Activated naive CD4-positive, alpha-beta T cell treated with anti-CD3 and anti-CD28 coated beads for 36 hours (primary cell): ENCODE measurements at regions of chr6 and their contacts with region 1.

Region 1: GRCh38 chr6:29792123-29793035 is 35.2 kb upstream of the HLA-G start:
- DNase-seq: peak; percentile 82
- H3K4me3 Mint-ChIP-seq: peak overlapping the region; percentile 77
- H3K27ac Mint-ChIP-seq: no peak overlapping the region
- H3K4me1 Mint-ChIP-seq: peaks cover 12% of the 10 kb centered on the region
- H3K27me3 Mint-ChIP-seq: peaks cover 14% of the 10 kb centered on the region

Region 2: GRCh38 chr6:29737707-29738630 is 54.4 kb before region 1 on chr6:
- CTCF ChIA-PET with region 1: interaction called, 3 read pairs
- intact Hi-C with region 1: loop called (anchors 1 kb)
- DNase-seq: peak; percentile 85
- H3K4me3 Mint-ChIP-seq: no peak overlapping the region
- H3K27ac Mint-ChIP-seq: no peak overlapping the region
- H3K4me1 Mint-ChIP-seq: peaks cover 11% of the 10 kb centered on the region
- H3K27me3 Mint-ChIP-seq: no peaks in the 10 kb centered on the region

Region 3: DNA sequence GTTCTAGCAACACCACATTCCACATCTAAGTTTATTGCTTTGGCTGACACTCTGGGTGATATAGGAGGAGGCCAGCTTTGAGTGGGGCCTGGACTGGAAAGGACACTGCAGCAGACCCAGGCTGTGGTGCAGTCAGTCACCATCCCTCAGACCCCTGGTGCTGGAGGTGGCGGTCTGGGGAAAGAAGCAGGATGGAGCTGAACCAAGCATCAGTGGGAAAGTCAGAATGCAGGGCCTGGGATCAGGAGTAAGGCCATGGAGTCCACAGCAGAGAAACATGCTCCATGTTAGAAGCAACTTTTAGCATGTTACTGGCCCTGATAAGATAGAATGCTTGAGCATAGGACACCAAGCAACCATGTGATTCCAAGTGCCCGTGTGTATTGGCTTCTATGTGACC is 155.9 kb after region 1 on chr6:
- CTCF ChIA-PET with region 1: no interaction called
- intact Hi-C with region 1: loop called (anchors 1 kb)
- DNase-seq: no peak
- H3K4me3 Mint-ChIP-seq: peak overlapping the region; percentile 11
- H3K27ac Mint-ChIP-seq: peak overlapping the region; percentile 54
- H3K4me1 Mint-ChIP-seq: peaks cover 36% of the 10 kb centered on the region
- H3K27me3 Mint-ChIP-seq: no peaks in the 10 kb centered on the region